ENCODE measurements at regions of chr13 and their contacts with region 1.

Region 1: DNA sequence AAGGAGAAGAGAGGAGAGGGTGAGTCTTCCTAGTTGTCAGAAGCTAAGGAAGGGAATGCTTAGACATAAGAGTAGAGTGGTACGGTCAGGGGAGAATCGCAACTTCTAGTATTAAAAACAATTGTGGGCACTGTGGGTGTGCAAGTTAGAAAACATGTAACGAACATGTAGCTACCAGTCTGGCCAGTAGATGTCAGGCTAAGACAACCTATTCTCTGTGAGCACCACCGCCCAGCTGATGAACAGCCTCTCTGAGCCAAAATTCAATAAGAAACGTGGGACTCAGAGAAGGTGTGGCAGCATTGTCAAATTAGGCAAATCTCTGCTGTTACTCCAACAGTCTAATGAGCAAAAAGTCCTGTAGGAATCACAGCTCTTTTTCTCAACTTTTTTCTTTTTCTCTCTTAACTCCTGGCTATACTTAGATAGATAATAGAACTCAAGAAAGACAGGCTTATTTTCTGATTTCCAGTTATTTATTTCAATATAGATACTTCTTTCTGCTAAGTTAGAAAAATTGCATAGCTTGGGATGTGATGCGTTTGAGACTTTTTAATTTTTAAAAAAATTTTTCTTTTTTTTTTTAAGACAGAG is 186.2 kb downstream of the USP12 start:
- DNase-seq: peak in 3 of 6 donors; percentile 65 to 81 (median 69)
- ATAC-seq: peak; percentile 49 to 83 (median 76)
- H3K4me3 ChIP-seq: no peak overlapping the region
- H3K27ac ChIP-seq: no peak overlapping the region
- H3K4me1 ChIP-seq: peaks cover 0 to 15% (median 2%) of the 10 kb centered on the region in 3 donors
- H3K27me3 ChIP-seq: no peaks in the 10 kb centered on the region
- CTCF ChIP-seq: peak; percentile 53 to 63 (median 54)

Region 2: GRCh38 chr13:27137759-27138158 is 152.4 kb after region 1 on chr13:
- intact Hi-C with region 1: no loop called
- DNase-seq: no peak
- ATAC-seq: peak in 1 of 4 donors; percentile 11
- H3K4me3 ChIP-seq: no peak overlapping the region
- H3K27ac ChIP-seq: no peak overlapping the region
- H3K4me1 ChIP-seq: peaks cover 3 to 16% (median 7%) of the 10 kb centered on the region in 3 donors
- H3K27me3 ChIP-seq: no peaks in the 10 kb centered on the region
- CTCF ChIP-seq: no peak

Region 3: GRCh38 chr13:27203854-27204253 is 218.5 kb after region 1 on chr13:
- intact Hi-C with region 1: loop called in 1 of 3 experiments (anchors 10 kb)
- DNase-seq: no peak
- ATAC-seq: peak in 3 of 4 donors; percentile 45 to 85 (median 53)
- H3K4me3 ChIP-seq: no peak overlapping the region
- H3K27ac ChIP-seq: no peak overlapping the region
- H3K4me1 ChIP-seq: no peaks in the 10 kb centered on the region
- H3K27me3 ChIP-seq: no peaks in the 10 kb centered on the region
- CTCF ChIP-seq: no peak

Region 4: GRCh38 chr13:27283906-27284493 is 298.6 kb after region 1 on chr13:
- intact Hi-C with region 1: loop called in 1 of 3 experiments (anchors 10 kb)
- DNase-seq: peak in 1 of 6 donors; percentile 36
- ATAC-seq: peak in 3 of 4 donors; percentile 84 to 90 (median 85)
- H3K4me3 ChIP-seq: no peak overlapping the region
- H3K27ac ChIP-seq: no peak overlapping the region
- H3K4me1 ChIP-seq: no peaks in the 10 kb centered on the region
- H3K27me3 ChIP-seq: no peaks in the 10 kb centered on the region
- CTCF ChIP-seq: peak in 2 of 4 donors; percentile 11 to 13